T-cell (primary cell): ENCODE measurements at regions of chr17 and their contacts with region 1.

Region 1: DNA sequence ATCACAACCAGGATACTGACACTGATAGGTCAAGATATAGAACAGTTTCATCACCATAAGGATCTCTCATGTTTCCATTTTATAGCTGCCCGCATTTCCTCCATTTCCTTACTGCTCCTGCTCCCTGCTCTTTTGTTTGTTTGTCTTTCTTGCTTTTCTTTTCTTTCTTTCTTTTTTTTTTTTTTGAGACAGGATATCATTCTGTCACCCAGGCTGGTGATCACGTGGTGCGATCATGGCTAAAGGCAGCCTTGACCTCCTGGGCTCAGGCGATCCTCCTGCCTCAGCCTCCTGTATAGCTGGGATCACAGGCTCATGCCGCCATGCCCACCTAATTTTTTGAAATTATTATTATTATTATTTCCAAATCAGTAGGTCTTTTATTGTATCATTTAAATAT is 31.7 kb downstream of the PRAC1 start:
- DNase-seq: no peak
- ATAC-seq: no peak
- H3K4me3 ChIP-seq: no peak overlapping the region
- H3K4me3 Mint-ChIP-seq: no peak overlapping the region
- H3K27ac ChIP-seq: no peak overlapping the region
- H3K27ac Mint-ChIP-seq: no peak overlapping the region
- H3K4me1 ChIP-seq: no peaks in the 10 kb centered on the region
- H3K4me1 Mint-ChIP-seq: no peaks in the 10 kb centered on the region
- H3K27me3 ChIP-seq: peaks cover 3 to 4% of the 10 kb centered on the region in 2 experiments
- H3K27me3 Mint-ChIP-seq: peaks cover 22 to 24% of the 10 kb centered on the region in 2 donors

Region 2: GRCh38 chr17:48718227-48718760 is 27.6 kb after region 1 on chr17:
- CTCF ChIA-PET with region 1: no interaction called
- POLR2A ChIA-PET with region 1: no interaction called
- DNase-seq: peak in 1 of 35 experiments; percentile 24
- ATAC-seq: no peak
- H3K4me3 ChIP-seq: peak overlapping the region in 1 of 2 donors; percentile 48
- H3K4me3 Mint-ChIP-seq: peak overlapping the region in 1 of 3 donors; percentile 59
- H3K27ac ChIP-seq: no peak overlapping the region
- H3K27ac Mint-ChIP-seq: no peak overlapping the region
- H3K4me1 ChIP-seq: peaks cover 2 to 30% of the 10 kb centered on the region in 2 experiments
- H3K4me1 Mint-ChIP-seq: peaks cover 19 to 26% (median 25%) of the 10 kb centered on the region in 3 donors
- H3K27me3 ChIP-seq: peaks cover 23 to 83% of the 10 kb centered on the region in 2 experiments
- H3K27me3 Mint-ChIP-seq: peaks cover 54 to 89% of the 10 kb centered on the region in 2 donors

Region 3: GRCh38 chr17:48745381-48746275 is 55.0 kb after region 1 on chr17:
- CTCF ChIA-PET with region 1: no interaction called
- POLR2A ChIA-PET with region 1: interaction called in 1 of 2 experiments, 10 read pairs
- DNase-seq: no peak
- ATAC-seq: no peak
- H3K4me3 ChIP-seq: no peak overlapping the region
- H3K4me3 Mint-ChIP-seq: no peak overlapping the region
- H3K27ac ChIP-seq: no peak overlapping the region
- H3K27ac Mint-ChIP-seq: no peak overlapping the region
- H3K4me1 ChIP-seq: peaks cover 0 to 15% of the 10 kb centered on the region in 2 experiments
- H3K4me1 Mint-ChIP-seq: peaks cover 0 to 10% (median 0%) of the 10 kb centered on the region in 3 donors
- H3K27me3 ChIP-seq: peaks cover 32 to 83% of the 10 kb centered on the region in 2 experiments
- H3K27me3 Mint-ChIP-seq: peaks cover 87 to 95% of the 10 kb centered on the region in 2 donors

Region 4: GRCh38 chr17:48791128-48792032 is 100.7 kb after region 1 on chr17:
- CTCF ChIA-PET with region 1: no interaction called
- POLR2A ChIA-PET with region 1: no interaction called
- DNase-seq: peak in 8 of 35 experiments; percentile 4 to 43 (median 12)
- ATAC-seq: peak in 2 of 4 experiments; percentile 47 to 52
- H3K4me3 ChIP-seq: no peak overlapping the region
- H3K4me3 Mint-ChIP-seq: no peak overlapping the region
- H3K27ac ChIP-seq: no peak overlapping the region
- H3K27ac Mint-ChIP-seq: no peak overlapping the region
- H3K4me1 ChIP-seq: peaks cover 0 to 8% of the 10 kb centered on the region in 2 experiments
- H3K4me1 Mint-ChIP-seq: peaks cover 0 to 7% (median 5%) of the 10 kb centered on the region in 3 donors
- H3K27me3 ChIP-seq: peaks cover 0 to 67% of the 10 kb centered on the region in 2 experiments
- H3K27me3 Mint-ChIP-seq: peaks cover 51 to 54% of the 10 kb centered on the region in 2 donors

Region 5: DNA sequence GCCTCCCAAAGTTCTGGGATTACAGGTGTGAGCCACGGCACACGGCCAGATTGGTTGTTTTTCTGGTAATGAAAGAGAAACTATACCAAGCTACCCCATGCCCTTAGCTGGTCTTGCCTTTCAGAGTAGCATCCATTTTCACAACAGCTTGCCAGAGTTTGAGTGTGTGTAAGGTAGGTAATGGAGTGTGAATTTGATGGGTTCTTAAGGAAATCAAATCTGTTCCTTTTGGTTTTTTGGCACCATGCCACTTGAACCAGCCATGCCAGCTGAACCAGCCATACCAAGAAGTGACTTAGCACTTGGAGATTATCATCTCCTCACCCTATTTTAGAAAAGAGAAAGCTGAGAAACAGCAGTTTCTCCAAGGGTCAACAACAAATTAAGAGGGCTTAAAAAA is 145.3 kb after region 1 on chr17:
- CTCF ChIA-PET with region 1: no interaction called
- POLR2A ChIA-PET with region 1: no interaction called
- DNase-seq: peak in 2 of 35 experiments; percentile 5 to 37
- ATAC-seq: no peak
- H3K4me3 ChIP-seq: no peak overlapping the region
- H3K4me3 Mint-ChIP-seq: peak overlapping the region in 1 of 3 donors; percentile 72
- H3K27ac ChIP-seq: no peak overlapping the region
- H3K27ac Mint-ChIP-seq: peak overlapping the region in 1 of 2 donors; percentile 11
- H3K4me1 ChIP-seq: peaks cover 58 to 79% of the 10 kb centered on the region in 2 experiments
- H3K4me1 Mint-ChIP-seq: peaks cover 85 to 95% (median 91%) of the 10 kb centered on the region in 3 donors
- H3K27me3 ChIP-seq: peaks cover 0 to 2% of the 10 kb centered on the region in 2 experiments
- H3K27me3 Mint-ChIP-seq: no peaks in the 10 kb centered on the region